A673 (cell line): ENCODE measurements at regions of chr13 and their contacts with region 1.

Region 1: GRCh38 chr13:28401303-28402056 is 93.4 kb downstream of the FLT1 start:
- DNase-seq: peak; percentile 37
- H3K4me3 ChIP-seq: no peak overlapping the region
- H3K27ac ChIP-seq: no peak overlapping the region
- H3K4me1 ChIP-seq: peaks cover 9% of the 10 kb centered on the region
- H3K27me3 ChIP-seq: no peaks in the 10 kb centered on the region
- CTCF ChIP-seq: no peak

Region 2: DNA sequence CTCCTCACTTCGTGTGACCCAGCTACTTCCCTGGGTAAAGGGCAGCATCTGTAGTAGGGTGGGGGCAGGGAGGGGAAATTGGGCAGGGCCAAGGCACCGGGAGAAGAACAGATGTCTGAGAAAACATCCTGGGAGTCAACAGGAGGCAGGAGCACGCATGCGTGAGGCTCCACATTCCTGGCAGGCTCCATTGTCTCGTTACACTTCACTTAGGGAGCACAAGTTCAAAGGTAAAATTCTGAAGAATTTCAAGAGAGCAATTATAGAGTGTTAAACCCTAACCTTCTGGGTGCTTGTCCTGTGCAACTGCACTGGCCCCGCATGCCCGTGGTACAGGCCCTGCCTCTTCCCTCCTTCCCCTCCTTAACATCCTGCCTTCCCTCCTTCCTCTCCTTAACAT is 177.8 kb after region 1 on chr13:
- CTCF ChIA-PET with region 1: no interaction called
- POLR2A ChIA-PET with region 1: interaction called, 17 read pairs
- intact Hi-C with region 1: no loop called
- DNase-seq: no peak
- H3K4me3 ChIP-seq: no peak overlapping the region
- H3K27ac ChIP-seq: no peak overlapping the region
- H3K4me1 ChIP-seq: no peaks in the 10 kb centered on the region
- H3K27me3 ChIP-seq: no peaks in the 10 kb centered on the region
- CTCF ChIP-seq: no peak